Psoas muscle (tissue), 8 donors: ENCODE measurements at regions of chr9 and their contacts with region 1.

Region 1: GRCh38 chr9:124492818-124493217 is 14.4 kb downstream of the NR5A1 start:
- DNase-seq: no peak
- ATAC-seq: no peak
- H3K4me3 ChIP-seq: no peak overlapping the region
- H3K27ac ChIP-seq: no peak overlapping the region
- H3K4me1 ChIP-seq: no peaks in the 10 kb centered on the region
- H3K27me3 ChIP-seq: peaks cover 0 to 16% (median 5%) of the 10 kb centered on the region in 3 donors
- CTCF ChIP-seq: no peak

Region 2: DNA sequence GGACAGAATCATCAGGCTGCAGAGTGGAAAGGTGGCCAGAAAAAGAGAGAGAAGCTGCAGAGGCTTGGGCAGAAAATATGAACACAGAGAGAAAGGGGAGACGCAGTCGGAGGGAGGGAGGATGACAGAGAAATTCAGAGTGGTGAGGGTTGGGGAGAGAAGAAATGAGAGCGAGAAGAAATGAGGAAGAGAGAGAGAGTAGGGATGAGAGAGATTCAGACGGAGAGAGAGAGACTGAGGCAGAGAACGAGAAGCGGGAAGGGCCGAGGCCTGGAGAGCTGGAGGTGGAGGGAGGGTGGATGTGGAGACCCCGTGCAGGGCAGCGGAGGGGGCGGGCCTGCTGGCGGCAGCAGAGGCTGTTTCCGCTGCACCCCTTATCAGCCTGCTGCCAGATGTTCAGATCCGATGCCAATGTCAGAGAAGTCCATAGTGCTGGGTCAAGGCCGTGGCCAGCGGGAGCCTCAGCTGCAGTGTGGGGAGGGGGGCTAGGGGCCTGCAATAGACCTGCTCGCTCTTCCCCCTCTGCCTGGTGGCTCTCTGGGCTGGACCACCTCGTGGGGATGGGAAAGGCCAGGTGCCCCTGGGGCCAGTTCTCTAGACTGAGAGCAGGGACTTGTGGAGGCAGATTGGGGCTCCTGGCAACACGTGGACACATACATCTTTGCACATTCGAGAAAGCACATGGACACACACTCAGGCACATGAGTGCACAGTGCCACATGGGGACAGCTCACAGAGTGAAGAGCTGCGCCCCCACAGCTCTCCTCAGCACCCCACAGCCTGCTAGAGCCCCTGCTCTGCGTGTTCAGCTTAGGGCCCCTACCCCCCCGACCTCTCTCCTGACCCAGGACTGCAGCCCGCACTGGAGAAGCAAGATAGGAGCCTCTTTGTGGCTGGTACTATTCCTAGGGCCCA is 19.3 kb after region 1 on chr9:
- intact Hi-C with region 1: loop called in 1 of 2 experiments (anchors 1 kb)
- DNase-seq: no peak
- ATAC-seq: peak in 1 of 4 donors; percentile 24
- H3K4me3 ChIP-seq: no peak overlapping the region
- H3K27ac ChIP-seq: no peak overlapping the region
- H3K4me1 ChIP-seq: no peaks in the 10 kb centered on the region
- H3K27me3 ChIP-seq: peaks cover 0 to 27% (median 2%) of the 10 kb centered on the region in 3 donors
- CTCF ChIP-seq: no peak

Region 3: DNA sequence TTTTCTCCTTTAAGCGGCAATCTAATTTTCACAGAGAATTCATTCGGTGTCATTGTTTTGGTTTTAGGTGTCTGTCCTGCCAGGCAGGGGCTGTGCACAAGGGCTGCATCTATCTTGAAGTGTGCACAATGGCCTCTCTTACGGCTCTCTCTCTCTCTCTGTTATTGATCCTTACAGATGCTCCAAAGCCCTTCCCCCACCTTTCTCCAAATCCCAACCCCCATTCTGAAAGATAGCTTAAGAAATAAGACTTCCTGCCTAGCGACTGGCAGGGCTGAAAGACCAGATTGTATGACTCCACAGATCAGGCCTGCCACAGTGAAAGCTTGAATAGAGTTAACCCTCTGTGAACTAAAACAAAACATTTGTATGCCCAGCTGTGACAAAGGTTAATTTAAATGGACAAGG is 100.8 kb after region 1 on chr9:
- intact Hi-C with region 1: no loop called
- DNase-seq: no peak
- ATAC-seq: no peak
- H3K4me3 ChIP-seq: no peak overlapping the region
- H3K27ac ChIP-seq: no peak overlapping the region
- H3K4me1 ChIP-seq: no peaks in the 10 kb centered on the region
- H3K27me3 ChIP-seq: no peaks in the 10 kb centered on the region
- CTCF ChIP-seq: no peak

Region 4: DNA sequence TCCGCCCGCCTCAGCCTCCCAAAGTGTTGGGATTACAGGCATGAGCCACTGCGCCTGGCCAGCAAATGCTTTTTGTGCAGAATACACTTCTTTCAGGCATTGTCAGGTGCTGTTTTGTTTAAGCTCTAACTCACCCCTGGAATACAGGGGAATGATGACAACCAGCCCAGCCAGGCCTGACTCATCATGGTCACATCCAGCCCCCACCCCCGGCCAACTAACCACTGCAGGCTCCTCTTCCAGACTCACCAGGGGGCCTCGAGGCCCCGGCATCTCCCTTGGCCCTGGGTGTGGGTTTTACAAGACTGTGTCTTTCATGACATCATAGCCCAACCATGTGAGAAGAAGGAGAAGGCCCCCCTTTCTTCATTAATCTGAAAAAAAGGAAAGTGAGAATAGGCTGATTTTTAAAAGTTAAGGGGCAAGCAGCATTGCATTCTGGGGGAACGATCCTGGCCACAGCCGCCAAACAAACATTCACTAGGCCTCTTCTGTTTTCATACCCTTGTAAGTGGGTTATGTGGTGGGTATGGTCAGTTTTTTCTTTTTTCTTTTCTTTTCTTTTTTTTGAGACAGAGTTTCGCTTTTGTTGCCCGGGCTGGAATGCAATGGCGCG is 319.7 kb after region 1 on chr9:
- intact Hi-C with region 1: no loop called
- DNase-seq: peak in 1 of 2 donors; percentile 78
- ATAC-seq: peak; percentile 43 to 57 (median 49)
- H3K4me3 ChIP-seq: no peak overlapping the region
- H3K27ac ChIP-seq: no peak overlapping the region
- H3K4me1 ChIP-seq: no peaks in the 10 kb centered on the region
- H3K27me3 ChIP-seq: no peaks in the 10 kb centered on the region
- CTCF ChIP-seq: no peak